HEK293T (cell line): ENCODE measurements at regions of chr17 and their contacts with region 1.

Region 1: GRCh38 chr17:48543107-48543853 is 1.6 kb downstream of the HOXB2 start:
- DNase-seq: peak; percentile 45

Region 2: DNA sequence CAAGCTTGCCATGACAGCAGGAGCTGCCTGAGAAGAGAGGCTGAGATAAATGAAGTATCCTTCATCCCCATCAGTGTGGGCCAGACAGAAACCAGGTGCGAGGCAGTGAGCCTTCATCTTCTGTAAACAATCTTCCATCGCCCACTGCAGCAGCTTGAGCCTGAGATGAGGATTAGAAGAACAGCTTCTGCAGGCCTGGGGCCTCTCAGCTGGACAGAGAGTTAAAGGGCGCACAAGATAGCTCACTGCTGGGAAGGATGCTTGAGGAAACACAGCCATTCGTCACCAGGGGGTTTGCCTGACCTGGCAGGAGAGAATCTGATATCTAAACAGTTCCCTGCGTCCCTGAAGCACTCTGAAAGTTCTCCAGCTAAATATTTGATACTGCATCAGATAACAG is 39.5 kb before region 1 on chr17:
- CTCF ChIA-PET with region 1: interaction called, 6 read pairs
- POLR2A ChIA-PET with region 1: interaction called, 10 read pairs
- DNase-seq: no peak

Region 3: DNA sequence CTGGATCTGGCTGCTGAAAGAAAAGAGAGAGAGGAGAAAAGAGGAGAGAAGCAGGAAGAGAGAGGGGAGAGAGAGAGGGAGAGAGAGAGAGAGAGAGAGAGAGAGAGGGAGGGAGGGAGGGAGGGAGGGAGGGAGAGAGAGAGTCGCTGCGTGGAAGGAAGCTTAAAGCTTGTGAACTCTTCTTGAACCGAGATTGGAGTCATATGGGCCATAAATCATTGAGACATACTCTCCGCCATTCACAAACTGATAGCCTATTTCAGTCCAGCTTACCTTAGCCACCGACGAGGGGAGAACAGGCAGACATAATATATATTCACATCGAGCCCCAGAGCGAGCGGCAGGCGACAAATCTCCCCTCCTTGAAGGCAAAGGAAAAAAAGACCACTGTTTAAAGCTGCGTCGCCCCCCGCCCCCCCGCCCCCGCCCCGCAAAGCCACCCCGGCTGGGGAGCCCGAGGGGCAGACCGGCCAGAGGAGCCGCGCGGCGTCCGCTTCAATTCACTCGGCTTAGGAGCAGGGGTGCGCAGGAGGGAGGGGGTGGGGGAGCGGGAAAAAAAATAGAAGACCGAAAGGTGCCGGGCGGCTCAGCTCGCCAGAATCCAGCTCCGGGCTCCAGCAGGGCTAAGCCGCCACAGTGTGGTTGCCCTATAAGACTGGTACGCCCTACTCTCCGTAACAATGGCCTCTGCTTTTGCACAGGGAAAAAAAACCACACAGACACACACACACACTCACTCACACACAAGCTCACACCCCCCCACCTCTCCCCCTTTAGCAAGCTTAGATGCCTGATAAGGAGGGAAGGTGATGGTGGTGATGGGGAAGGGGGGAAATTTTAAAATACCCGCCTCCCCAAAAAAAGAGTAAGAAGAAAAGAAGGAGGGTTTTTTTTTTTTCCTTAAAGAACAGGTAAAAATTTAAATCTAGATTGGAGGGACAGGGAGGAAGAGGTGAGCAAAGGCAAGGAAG is 12.3 kb after region 1 on chr17:
- CTCF ChIA-PET with region 1: interaction called, 10 read pairs
- POLR2A ChIA-PET with region 1: interaction called, 19 read pairs
- DNase-seq: peak; percentile 79

Region 4: GRCh38 chr17:48571024-48571818 is 27.9 kb after region 1 on chr17:
- CTCF ChIA-PET with region 1: interaction called, 3 read pairs
- POLR2A ChIA-PET with region 1: interaction called, 10 read pairs
- DNase-seq: no peak

Region 5: DNA sequence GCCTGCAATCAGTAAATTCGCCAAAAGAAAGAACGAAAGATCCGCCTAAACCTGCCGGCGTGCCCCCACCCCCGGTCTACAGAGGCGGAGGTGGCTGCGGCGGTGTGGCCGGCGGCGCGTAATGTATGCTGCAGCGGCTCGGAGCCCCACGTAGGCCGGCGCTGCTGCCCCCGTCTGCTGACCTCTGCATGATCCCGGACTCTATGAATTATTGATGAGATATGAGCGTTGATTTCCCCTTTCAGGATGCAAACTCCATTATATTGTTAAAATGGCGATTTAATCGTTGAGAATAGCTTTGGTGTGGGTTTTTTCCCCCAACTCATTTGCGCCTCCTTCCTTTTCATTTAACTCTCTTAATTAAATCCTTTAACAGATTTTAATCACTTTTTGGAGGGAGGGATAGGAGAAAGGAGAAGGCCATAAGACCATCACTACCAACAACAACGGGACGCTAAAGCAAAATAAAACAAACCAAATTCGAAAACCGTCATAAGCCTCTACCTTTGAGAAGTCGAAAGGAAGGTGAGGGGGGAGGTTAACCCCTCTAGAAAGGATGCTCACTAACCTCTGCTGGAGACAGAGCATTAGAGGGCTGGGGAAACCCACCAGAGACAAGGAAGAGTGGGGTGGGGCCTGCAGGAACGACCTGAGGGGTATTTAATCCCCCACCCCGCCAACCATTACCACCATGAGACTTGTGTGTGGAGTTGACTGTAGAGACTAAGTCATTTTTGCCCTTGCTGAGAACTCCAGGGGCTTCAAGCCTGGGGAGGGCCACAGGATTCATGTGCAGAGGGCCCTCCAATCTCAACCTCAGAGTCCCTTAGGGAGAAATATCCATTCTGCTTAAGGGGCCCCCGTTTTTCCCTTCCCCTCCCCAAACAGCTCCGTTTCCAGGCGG is 43.3 kb after region 1 on chr17:
- CTCF ChIA-PET with region 1: interaction called, 3 read pairs
- POLR2A ChIA-PET with region 1: interaction called, 21 read pairs
- DNase-seq: no peak